Posterior vena cava (tissue), 2 donors: ENCODE measurements at regions of chr13 and their contacts with region 1.

Region 1: DNA sequence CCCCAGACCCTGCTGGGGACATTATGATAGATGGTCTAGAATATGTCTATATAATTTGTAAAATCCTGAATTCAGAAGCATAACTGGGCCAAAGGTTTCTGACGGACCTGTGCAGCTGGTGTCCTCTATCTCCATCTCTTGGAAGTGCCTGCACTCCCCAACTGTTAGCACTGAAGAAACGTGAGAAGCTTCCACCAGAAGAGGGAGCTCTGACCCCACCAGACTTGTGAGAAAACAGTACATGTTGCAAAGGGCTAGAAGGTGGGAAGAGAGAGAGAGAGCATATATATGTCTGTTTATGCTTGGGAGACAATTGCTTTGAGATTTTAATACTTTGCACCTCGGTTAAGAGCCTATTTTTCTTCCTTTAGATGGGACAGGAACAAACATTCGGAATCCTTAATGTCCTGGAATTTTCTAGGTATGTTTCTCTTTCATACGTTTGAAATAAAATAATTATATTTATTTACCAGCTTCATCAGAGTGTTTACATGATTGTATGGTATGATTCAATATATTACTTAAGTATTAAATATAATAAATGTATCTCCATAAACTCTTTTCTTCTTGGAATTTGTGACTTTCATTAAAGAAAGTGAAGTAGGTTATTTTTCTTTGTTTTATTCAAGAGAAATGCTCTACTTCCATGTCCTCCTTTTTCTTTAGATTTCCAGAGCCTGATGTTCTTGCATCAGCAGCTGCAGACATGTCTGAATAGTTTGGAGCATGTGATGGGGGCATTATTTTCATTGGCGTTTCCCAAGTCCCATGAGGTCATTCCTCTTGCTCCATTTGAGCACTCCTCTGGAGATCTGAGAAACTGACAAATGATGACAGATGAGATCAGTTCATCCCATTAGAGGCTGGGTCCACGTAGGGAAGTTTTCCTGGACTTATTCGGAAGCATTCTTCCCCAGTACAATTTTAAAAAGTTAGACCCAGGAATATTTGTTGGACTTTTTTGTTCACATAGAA is 202.9 kb downstream of the ATP8A2 start:
- DNase-seq: no peak

Region 2: GRCh38 chr13:26062844-26063444 is 488.2 kb after region 1 on chr13:
- intact Hi-C with region 1: loop called in 1 of 2 experiments (anchors 5 kb)
- DNase-seq: no peak